Endothelial cell of umbilical vein (primary cell): ENCODE measurements at regions of chr5 and their contacts with region 1.

Region 1: GRCh38 chr5:83473346-83474163 is 2.0 kb downstream of the VCAN start:
- DNase-seq: peak; percentile 87
- H3K4me3 ChIP-seq: peak overlapping the region; percentile 48 to 73 (median 59)
- H3K27ac ChIP-seq: no peak overlapping the region
- H3K4me1 ChIP-seq: peaks cover 35% of the 10 kb centered on the region
- H3K27me3 ChIP-seq: peaks cover 49 to 74% of the 10 kb centered on the region in 2 experiments
- CTCF ChIP-seq: peak; percentile 86
- POLR2A ChIP-seq: no peak

Region 2: GRCh38 chr5:82312373-82312856 is 1161.1 kb before region 1 on chr5:
- CTCF ChIA-PET with region 1: interaction called, 9 read pairs
- POLR2A ChIA-PET with region 1: no interaction called
- dilution Hi-C with region 1: no loop called
- intact Hi-C with region 1: loop called (anchors 1 kb)
- DNase-seq: peak; percentile 63
- H3K4me3 ChIP-seq: no peak overlapping the region
- H3K27ac ChIP-seq: no peak overlapping the region
- H3K4me1 ChIP-seq: peaks cover 7% of the 10 kb centered on the region
- H3K27me3 ChIP-seq: peaks cover 3 to 4% of the 10 kb centered on the region in 2 experiments
- CTCF ChIP-seq: peak; percentile 77 to 90
- POLR2A ChIP-seq: no peak

Region 3: DNA sequence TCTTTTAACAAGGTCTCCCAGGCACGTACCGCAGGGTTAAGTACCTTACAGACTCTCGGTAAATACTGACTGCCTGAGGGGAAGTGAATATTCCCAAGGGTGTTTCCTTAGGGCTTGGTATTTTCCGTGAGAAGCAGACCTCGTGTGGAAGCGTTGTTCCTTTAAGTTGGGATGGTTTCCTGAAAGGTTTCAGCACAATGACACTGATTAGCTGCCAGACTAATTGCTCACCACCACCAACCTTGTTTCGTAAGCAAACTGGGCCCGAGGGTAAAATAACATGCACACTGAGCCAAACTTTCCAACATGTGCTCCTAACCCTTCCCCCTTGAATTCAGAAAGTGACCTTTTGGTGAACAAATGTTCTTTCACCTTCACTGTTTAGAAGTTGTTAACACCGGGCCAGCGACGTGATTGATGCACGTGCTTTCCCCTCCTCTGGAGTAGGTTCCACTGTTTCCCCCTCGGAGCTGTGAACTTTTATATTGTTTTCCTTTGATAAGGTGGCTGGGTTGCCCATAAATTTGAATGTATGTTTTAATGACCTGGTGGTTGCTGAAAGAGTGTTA is 1067.3 kb before region 1 on chr5:
- CTCF ChIA-PET with region 1: no interaction called
- POLR2A ChIA-PET with region 1: no interaction called
- dilution Hi-C with region 1: no loop called
- intact Hi-C with region 1: loop called (anchors 5 kb)
- DNase-seq: peak; percentile 100
- H3K4me3 ChIP-seq: peak overlapping the region in 1 of 3 experiments; percentile 1
- H3K27ac ChIP-seq: peak overlapping the region; percentile 99
- H3K4me1 ChIP-seq: peaks cover 28% of the 10 kb centered on the region
- H3K27me3 ChIP-seq: no peaks in the 10 kb centered on the region
- CTCF ChIP-seq: no peak
- POLR2A ChIP-seq: peak; percentile 65

Region 4: GRCh38 chr5:82793808-82794419 is 679.6 kb before region 1 on chr5:
- CTCF ChIA-PET with region 1: interaction called, 4 read pairs
- POLR2A ChIA-PET with region 1: no interaction called
- dilution Hi-C with region 1: no loop called
- intact Hi-C with region 1: loop called (anchors 1 kb)
- DNase-seq: peak; percentile 53
- H3K4me3 ChIP-seq: no peak overlapping the region
- H3K27ac ChIP-seq: no peak overlapping the region
- H3K4me1 ChIP-seq: no peaks in the 10 kb centered on the region
- H3K27me3 ChIP-seq: peaks cover 0 to 7% of the 10 kb centered on the region in 2 experiments
- CTCF ChIP-seq: peak; percentile 67 to 69
- POLR2A ChIP-seq: no peak

Region 5: GRCh38 chr5:83095957-83096539 is 377.5 kb before region 1 on chr5:
- CTCF ChIA-PET with region 1: no interaction called
- POLR2A ChIA-PET with region 1: no interaction called
- dilution Hi-C with region 1: no loop called
- intact Hi-C with region 1: loop called (anchors 5 kb)
- DNase-seq: peak; percentile 51
- H3K4me3 ChIP-seq: no peak overlapping the region
- H3K27ac ChIP-seq: no peak overlapping the region
- H3K4me1 ChIP-seq: peaks cover 16% of the 10 kb centered on the region
- H3K27me3 ChIP-seq: peaks cover 17 to 24% of the 10 kb centered on the region in 2 experiments
- CTCF ChIP-seq: no peak
- POLR2A ChIP-seq: no peak

Region 6: GRCh38 chr5:83422284-83422683 is 51.3 kb before region 1 on chr5:
- CTCF ChIA-PET with region 1: no interaction called
- POLR2A ChIA-PET with region 1: no interaction called
- dilution Hi-C with region 1: no loop called
- intact Hi-C with region 1: no loop called
- DNase-seq: no peak
- H3K4me3 ChIP-seq: no peak overlapping the region
- H3K27ac ChIP-seq: no peak overlapping the region
- H3K4me1 ChIP-seq: no peaks in the 10 kb centered on the region
- H3K27me3 ChIP-seq: peaks cover 4 to 15% of the 10 kb centered on the region in 2 experiments
- CTCF ChIP-seq: no peak
- POLR2A ChIP-seq: no peak

Region 7: DNA sequence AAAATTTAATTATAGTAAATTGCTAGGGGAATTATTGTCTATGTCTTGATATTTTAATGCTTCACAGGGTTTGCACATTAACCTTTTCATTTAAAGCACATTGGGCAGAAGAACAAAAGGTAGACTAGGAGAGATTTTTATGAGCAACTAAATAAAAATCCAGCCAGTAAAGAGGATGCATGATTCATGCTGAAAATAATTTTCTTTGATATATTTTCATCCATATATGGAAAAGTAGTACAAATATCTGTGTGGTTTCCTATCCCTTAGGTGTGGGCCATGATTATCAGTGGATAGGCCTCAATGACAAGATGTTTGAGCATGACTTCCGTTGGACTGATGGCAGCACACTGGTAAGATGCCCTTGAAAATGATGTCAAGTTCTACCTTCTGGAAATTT is 81.1 kb after region 1 on chr5:
- CTCF ChIA-PET with region 1: interaction called, 3 read pairs
- POLR2A ChIA-PET with region 1: no interaction called
- dilution Hi-C with region 1: no loop called
- intact Hi-C with region 1: loop called (anchors 2 kb)
- DNase-seq: no peak
- H3K4me3 ChIP-seq: no peak overlapping the region
- H3K27ac ChIP-seq: no peak overlapping the region
- H3K4me1 ChIP-seq: peaks cover 18% of the 10 kb centered on the region
- H3K27me3 ChIP-seq: peaks cover 0 to 3% of the 10 kb centered on the region in 2 experiments
- CTCF ChIP-seq: no peak
- POLR2A ChIP-seq: no peak